CD4-positive, alpha-beta memory T cell (primary cell): ENCODE measurements at regions of chr6 and their contacts with region 1.

Region 1: DNA sequence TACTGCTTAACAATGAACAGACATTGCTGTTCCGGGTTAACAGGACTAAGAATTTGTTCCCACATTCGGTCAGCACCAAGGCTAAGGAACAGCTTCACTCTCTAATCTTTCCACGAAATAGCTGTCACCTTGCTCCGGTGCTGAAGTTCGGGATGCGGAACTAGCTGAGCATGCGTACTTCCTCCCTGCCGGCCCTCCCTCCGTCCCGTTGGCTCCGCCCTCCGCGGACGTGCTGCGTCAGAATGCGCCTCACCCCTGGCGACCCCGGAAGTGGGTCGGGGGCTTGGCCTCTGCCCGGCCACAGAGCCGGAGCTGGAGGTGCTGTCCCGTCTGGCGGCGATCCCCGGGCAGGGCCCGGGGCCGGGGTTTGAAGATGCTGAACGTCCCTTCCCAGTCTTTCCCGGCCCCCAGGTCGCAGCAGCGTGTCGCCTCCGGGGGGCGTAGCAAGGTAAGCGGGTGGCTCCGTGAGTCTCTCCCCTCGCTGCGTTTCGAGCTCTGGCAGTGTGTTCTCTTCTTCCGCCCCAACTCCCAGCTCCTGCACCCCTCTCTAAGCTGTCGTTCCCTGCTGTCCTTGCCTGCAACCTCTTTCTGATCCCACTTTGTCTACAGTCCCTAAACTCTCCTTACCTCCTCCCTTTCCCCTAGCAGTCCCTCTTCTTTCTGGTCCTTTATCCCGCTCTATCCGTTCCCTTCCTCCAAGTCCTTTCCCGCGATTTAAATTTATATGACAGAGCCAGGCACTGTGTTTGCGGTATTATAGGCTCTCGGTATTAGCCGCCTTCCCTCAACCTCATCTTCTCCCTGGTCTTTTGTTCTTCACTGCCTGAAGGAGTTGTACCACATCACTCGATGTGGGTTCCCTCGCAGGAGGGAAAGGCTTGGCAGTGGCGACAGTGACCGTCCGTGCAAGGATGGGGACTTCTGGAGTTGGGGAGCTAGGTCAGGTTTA is at the start of gene CYB5R4:
- DNase-seq: peak; percentile 94 to 95 (median 94)
- H3K4me3 ChIP-seq: peak within 1 kb of the TSS; percentile 87 to 95
- H3K4me3 Mint-ChIP-seq: peak within 1 kb of the TSS; percentile 94 to 99 (median 98)
- H3K27ac ChIP-seq: peak within 1 kb of the TSS; percentile 79
- H3K27ac Mint-ChIP-seq: peak within 1 kb of the TSS; percentile 87 to 97 (median 95)
- H3K4me1 ChIP-seq: peaks cover 22% of the 10 kb centered on the region
- H3K4me1 Mint-ChIP-seq: peaks cover 29 to 46% (median 37%) of the 10 kb centered on the region in 4 donors
- H3K27me3 ChIP-seq: no peaks in the 10 kb centered on the region
- H3K27me3 Mint-ChIP-seq: peaks cover 9% of the 10 kb centered on the region in 2 donors
- total RNA-seq, gene CYB5R4: 24.0 to 26.2 TPM

Region 2: GRCh38 chr6:82589509-82590206 is 1270.0 kb before region 1 on chr6:
- CTCF ChIA-PET with region 1: no interaction called
- POLR2A ChIA-PET with region 1: no interaction called
- intact Hi-C with region 1: no loop called
- DNase-seq: peak in 2 of 5 donors; percentile 7 to 9
- H3K4me3 ChIP-seq: no peak overlapping the region
- H3K4me3 Mint-ChIP-seq: no peak overlapping the region
- H3K27ac ChIP-seq: no peak overlapping the region
- H3K27ac Mint-ChIP-seq: no peak overlapping the region
- H3K4me1 ChIP-seq: no peaks in the 10 kb centered on the region
- H3K4me1 Mint-ChIP-seq: peaks cover 0 to 5% (median 0%) of the 10 kb centered on the region in 4 donors
- H3K27me3 ChIP-seq: no peaks in the 10 kb centered on the region
- H3K27me3 Mint-ChIP-seq: peaks cover 0 to 2% of the 10 kb centered on the region in 2 donors

Region 3: DNA sequence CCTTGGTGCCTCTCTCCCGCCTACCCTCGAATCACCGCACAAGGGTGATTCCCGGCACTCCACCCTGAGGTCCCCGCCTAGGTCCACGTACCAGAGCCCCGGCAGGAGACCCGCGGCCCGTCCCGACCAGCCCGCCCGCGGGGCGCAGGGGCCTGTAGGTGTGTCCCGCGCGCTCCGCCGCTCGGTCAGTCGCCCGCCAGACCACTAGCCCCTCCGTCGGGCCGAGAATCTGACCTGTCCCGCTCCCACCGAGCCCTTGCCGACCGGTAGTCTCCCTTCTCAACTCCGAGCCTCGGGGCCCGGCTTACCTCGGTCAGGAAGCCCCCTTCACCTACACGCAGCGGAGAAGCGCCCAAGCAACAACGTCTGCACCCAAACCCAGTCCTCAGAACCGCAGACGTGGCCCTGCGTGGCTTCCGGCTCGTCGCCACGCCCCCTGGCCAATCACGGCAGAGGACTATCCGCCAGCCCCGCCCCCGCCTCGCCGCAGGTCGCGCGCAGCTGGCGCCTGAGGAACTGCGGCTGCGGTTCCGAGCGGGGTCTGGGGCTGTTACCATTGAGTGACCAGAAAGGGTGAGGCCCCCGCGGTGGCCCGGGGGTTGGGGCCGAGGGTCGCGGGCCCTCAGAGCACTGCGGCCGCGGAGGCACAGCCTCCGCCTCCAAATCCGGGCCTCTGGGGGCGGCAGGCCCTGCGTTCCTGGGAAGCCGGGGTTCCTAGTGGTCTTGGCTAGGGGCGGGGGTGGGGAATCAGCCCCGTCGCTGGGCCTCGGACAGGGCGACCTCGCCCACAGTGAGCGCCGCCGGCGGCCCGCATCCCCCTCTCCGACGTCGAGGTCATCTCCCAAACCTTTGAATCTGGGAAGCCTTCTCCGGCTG is 666.6 kb before region 1 on chr6 and contains the starts of genes PGM3 and RWDD2A:
- CTCF ChIA-PET with region 1: no interaction called
- POLR2A ChIA-PET with region 1: no interaction called
- intact Hi-C with region 1: loop called (anchors 5 kb)
- DNase-seq: peak; percentile 87 to 90 (median 90)
- H3K4me3 ChIP-seq: peak within 1 kb of the TSS; percentile 65 to 71
- H3K4me3 Mint-ChIP-seq: peak within 1 kb of the TSS; percentile 96 to 99 (median 98)
- H3K27ac ChIP-seq: peak within 1 kb of the TSS; percentile 88
- H3K27ac Mint-ChIP-seq: peak within 1 kb of the TSS; percentile 87 to 99 (median 98)
- H3K4me1 ChIP-seq: peaks cover 21% of the 10 kb centered on the region
- H3K4me1 Mint-ChIP-seq: peaks cover 32 to 66% (median 49%) of the 10 kb centered on the region in 4 donors
- H3K27me3 ChIP-seq: no peaks in the 10 kb centered on the region
- H3K27me3 Mint-ChIP-seq: no peaks in the 10 kb centered on the region
- total RNA-seq, gene PGM3: 35.9 to 39.9 TPM
- total RNA-seq, gene RWDD2A: 5.0 to 5.2 TPM

Region 4: DNA sequence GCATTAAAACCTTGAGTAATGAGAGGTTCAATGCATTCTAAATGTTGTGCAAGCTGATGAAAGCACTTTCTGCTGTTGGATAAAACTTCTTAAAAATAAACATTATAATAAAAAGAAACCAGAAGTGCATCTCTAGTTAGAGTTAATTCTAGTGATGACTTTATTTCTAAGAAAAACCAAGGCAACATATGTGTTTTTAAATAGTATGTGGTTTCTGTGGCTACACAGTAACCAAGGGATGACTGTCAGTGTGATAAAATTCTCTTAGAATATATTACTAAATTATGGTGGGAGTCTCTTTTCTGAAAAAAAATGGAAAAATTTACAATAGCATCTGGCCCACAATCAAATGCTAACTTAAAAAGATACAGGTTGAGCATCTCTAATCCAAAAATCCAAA is 545.8 kb before region 1 on chr6:
- CTCF ChIA-PET with region 1: no interaction called
- POLR2A ChIA-PET with region 1: no interaction called
- intact Hi-C with region 1: no loop called
- DNase-seq: no peak
- H3K4me3 ChIP-seq: no peak overlapping the region
- H3K4me3 Mint-ChIP-seq: no peak overlapping the region
- H3K27ac ChIP-seq: no peak overlapping the region
- H3K27ac Mint-ChIP-seq: no peak overlapping the region
- H3K4me1 ChIP-seq: no peaks in the 10 kb centered on the region
- H3K4me1 Mint-ChIP-seq: peaks cover 0 to 5% (median under 1%) of the 10 kb centered on the region in 4 donors
- H3K27me3 ChIP-seq: no peaks in the 10 kb centered on the region
- H3K27me3 Mint-ChIP-seq: peaks cover 0 to 6% of the 10 kb centered on the region in 2 donors

Region 5: DNA sequence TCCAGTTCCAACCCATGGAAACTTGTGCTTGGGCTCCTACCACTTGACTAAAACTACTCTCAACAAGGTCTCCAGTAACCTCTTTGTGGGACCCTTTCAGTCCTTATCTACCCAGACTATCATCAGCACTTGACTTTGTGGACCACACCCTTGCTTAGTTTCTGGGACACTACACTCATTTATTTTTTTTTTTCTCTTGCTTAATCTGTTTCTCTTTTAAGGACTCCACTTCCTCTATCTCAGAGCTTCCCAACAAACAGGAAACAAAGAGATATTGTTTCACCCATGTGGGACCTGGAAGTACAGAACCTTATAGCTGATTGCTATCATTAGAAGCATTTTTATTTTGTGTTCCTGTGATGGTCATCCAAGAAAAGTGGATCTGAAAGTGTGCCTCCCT is 400.0 kb before region 1 on chr6:
- CTCF ChIA-PET with region 1: no interaction called
- POLR2A ChIA-PET with region 1: no interaction called
- intact Hi-C with region 1: no loop called
- DNase-seq: no peak
- H3K4me3 ChIP-seq: no peak overlapping the region
- H3K4me3 Mint-ChIP-seq: no peak overlapping the region
- H3K27ac ChIP-seq: no peak overlapping the region
- H3K27ac Mint-ChIP-seq: no peak overlapping the region
- H3K4me1 ChIP-seq: no peaks in the 10 kb centered on the region
- H3K4me1 Mint-ChIP-seq: no peaks in the 10 kb centered on the region
- H3K27me3 ChIP-seq: no peaks in the 10 kb centered on the region
- H3K27me3 Mint-ChIP-seq: no peaks in the 10 kb centered on the region